AG04450 (cell line): ENCODE measurements at regions of chr9 and their contacts with region 1.

Region 1: GRCh38 chr9:112809351-112809848 is 58.8 kb downstream of the SNX30 start:
- DNase-seq: no peak
- H3K4me3 ChIP-seq: no peak overlapping the region
- H3K27ac ChIP-seq: no peak overlapping the region
- H3K27me3 ChIP-seq: no peaks in the 10 kb centered on the region
- CTCF ChIP-seq: no peak

Region 2: GRCh38 chr9:112717661-112718341 is 91.6 kb before region 1 on chr9 and contains the start of gene INIP:
- CTCF ChIA-PET with region 1: no interaction called
- POLR2A ChIA-PET with region 1: interaction called, 11 read pairs
- DNase-seq: peak; percentile 84
- H3K4me3 ChIP-seq: peak within 1 kb of the TSS; percentile 95
- H3K27ac ChIP-seq: peak within 1 kb of the TSS; percentile 47
- H3K27me3 ChIP-seq: no peaks in the 10 kb centered on the region
- CTCF ChIP-seq: no peak
- polyA plus RNA-seq, gene INIP: 20.2 and 29.2 TPM in 2 replicates